CD4-positive, alpha-beta T cell (primary cell): ENCODE measurements at regions of chr10 and their contacts with region 1.

Region 1: DNA sequence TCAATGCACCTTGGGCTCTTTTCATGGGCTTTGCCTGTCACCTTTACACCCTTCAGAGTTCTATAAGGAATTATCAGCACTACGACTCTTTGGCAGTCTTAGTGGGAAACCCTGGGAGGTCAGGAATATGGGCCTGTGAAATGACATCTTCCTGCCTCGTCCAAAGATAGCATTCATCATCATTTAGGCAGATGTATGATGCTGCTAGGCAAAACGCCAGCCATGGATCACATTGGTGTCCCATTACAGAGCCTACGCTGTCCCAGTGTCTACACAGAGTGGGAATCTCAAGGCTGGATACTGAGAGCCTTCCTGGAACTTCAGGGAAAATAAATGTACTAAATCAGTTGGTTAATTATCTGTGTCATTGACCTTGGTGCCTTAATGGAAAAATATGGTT is 259.4 kb upstream of the CELF2 start:
- DNase-seq: no peak
- ATAC-seq: no peak
- H3K4me3 ChIP-seq: no peak overlapping the region
- H3K4me3 Mint-ChIP-seq: no peak overlapping the region
- H3K27ac ChIP-seq: no peak overlapping the region
- H3K27ac Mint-ChIP-seq: no peak overlapping the region
- H3K4me1 ChIP-seq: no peaks in the 10 kb centered on the region
- H3K4me1 Mint-ChIP-seq: no peaks in the 10 kb centered on the region
- H3K27me3 ChIP-seq: no peaks in the 10 kb centered on the region
- H3K27me3 Mint-ChIP-seq: no peaks in the 10 kb centered on the region
- CTCF ChIP-seq: no peak

Region 2: DNA sequence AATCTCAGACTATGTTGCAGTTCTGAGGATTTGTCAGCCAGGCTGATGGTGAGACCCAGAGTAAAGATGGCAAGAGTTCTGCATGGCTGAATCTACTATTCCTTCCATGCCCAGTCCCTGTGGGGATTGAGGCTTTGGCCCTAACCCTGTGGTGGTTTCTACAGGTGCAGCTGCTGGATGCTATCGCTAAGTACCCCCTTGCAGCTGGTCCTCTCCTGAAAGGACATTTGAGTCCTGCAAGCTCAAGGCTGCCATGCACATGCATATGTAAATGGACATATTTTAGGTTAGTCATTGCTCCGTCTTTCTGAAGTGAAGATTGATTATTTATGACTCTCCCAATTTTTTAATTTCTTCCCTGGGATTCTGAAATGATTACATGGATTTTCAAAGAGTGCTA is 862.9 kb before region 1 on chr10:
- CTCF ChIA-PET with region 1: no interaction called
- POLR2A ChIA-PET with region 1: no interaction called
- intact Hi-C with region 1: no loop called
- DNase-seq: no peak
- ATAC-seq: no peak
- H3K4me3 ChIP-seq: no peak overlapping the region
- H3K4me3 Mint-ChIP-seq: no peak overlapping the region
- H3K27ac ChIP-seq: no peak overlapping the region
- H3K27ac Mint-ChIP-seq: no peak overlapping the region
- H3K4me1 ChIP-seq: no peaks in the 10 kb centered on the region
- H3K4me1 Mint-ChIP-seq: no peaks in the 10 kb centered on the region
- H3K27me3 ChIP-seq: no peaks in the 10 kb centered on the region
- H3K27me3 Mint-ChIP-seq: no peaks in the 10 kb centered on the region
- CTCF ChIP-seq: no peak

Region 3: GRCh38 chr10:10745291-10745690 is 13.0 kb before region 1 on chr10:
- CTCF ChIA-PET with region 1: no interaction called
- POLR2A ChIA-PET with region 1: no interaction called
- intact Hi-C with region 1: loop called in 1 of 2 experiments (anchors 1 kb)
- DNase-seq: no peak
- ATAC-seq: no peak
- H3K4me3 ChIP-seq: no peak overlapping the region
- H3K4me3 Mint-ChIP-seq: no peak overlapping the region
- H3K27ac ChIP-seq: no peak overlapping the region
- H3K27ac Mint-ChIP-seq: no peak overlapping the region
- H3K4me1 ChIP-seq: no peaks in the 10 kb centered on the region
- H3K4me1 Mint-ChIP-seq: no peaks in the 10 kb centered on the region
- H3K27me3 ChIP-seq: no peaks in the 10 kb centered on the region
- H3K27me3 Mint-ChIP-seq: peaks cover 24% of the 10 kb centered on the region
- CTCF ChIP-seq: no peak